GM12878 (cell line): ENCODE measurements at regions of chr2 and their contacts with region 1.

Region 1: DNA sequence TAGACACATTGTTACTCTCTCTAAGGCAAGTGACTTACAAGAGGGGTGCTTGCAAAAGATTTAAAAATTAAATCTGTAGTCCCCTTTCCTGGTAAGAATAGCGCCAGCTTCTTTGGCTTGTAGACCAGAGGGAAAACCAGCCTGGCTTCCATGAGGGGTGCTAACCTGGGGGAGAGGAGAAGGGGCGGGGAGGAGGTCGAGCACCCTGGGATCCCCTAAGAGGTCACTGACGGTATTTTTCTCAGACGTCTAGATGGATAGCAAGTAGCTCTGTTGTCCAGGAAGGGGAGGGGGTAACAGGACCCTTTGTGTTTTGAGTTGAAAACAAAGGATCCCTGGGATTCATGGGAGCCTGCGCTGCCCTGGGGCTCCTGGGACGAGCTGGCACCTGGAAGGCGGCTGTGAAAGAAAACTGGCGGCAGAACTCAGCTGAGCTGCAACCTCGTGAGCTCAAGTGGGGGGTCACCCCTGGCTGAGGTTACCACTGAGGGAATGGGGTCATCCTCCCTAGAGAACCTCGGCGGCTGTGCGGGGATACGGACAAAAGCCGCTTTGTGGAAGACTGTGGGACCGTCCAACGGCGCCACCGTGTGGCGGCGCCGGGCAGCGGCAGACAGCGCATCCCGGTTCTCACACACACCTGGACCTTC is 37.8 kb upstream of the MRPL19 start:
- DNase-seq: no peak
- ATAC-seq: peak; percentile 97
- H3K4me3 ChIP-seq: peak overlapping the region; percentile 49; the same call in 1 of the 2 replicates
- H3K27ac ChIP-seq: no peak overlapping the region
- H3K4me1 ChIP-seq: 0 out of 2 replicates have a peak, but pooled peaks cover 2% of the 10 kb centered on the region
- H3K27me3 ChIP-seq: no peaks in the 10 kb centered on the region
- CTCF ChIP-seq: peak; percentile 96 to 98 (median 98)
- EP300 ChIP-seq: no peak
- POLR2A ChIP-seq: no peak
- RAD21 ChIP-seq: peak; percentile 88

Region 2: GRCh38 chr2:74690571-74690970 is 918.2 kb before region 1 on chr2:
- CTCF ChIA-PET with region 1: interaction called, 4 read pairs
- POLR2A ChIA-PET with region 1: no interaction called
- RAD21 ChIA-PET with region 1: no interaction called
- SMC1A ChIA-PET with region 1: interaction called, 3 read pairs
- in situ Hi-C with region 1: loop called (anchors 10 kb)
- intact Hi-C with region 1: no loop called
- DNase-seq: peak; percentile 28
- ATAC-seq: peak; percentile 95
- H3K4me3 ChIP-seq: no peak overlapping the region
- H3K27ac ChIP-seq: no peak overlapping the region
- H3K4me1 ChIP-seq: no peaks in the 10 kb centered on the region
- H3K27me3 ChIP-seq: peaks cover 0 to 2% of the 10 kb centered on the region in 2 experiments; a peak in 1 of 4 replicates
- CTCF ChIP-seq: peak; percentile 71 to 92 (median 72)
- EP300 ChIP-seq: no peak
- POLR2A ChIP-seq: no peak
- RAD21 ChIP-seq: peak; percentile 94

Region 3: DNA sequence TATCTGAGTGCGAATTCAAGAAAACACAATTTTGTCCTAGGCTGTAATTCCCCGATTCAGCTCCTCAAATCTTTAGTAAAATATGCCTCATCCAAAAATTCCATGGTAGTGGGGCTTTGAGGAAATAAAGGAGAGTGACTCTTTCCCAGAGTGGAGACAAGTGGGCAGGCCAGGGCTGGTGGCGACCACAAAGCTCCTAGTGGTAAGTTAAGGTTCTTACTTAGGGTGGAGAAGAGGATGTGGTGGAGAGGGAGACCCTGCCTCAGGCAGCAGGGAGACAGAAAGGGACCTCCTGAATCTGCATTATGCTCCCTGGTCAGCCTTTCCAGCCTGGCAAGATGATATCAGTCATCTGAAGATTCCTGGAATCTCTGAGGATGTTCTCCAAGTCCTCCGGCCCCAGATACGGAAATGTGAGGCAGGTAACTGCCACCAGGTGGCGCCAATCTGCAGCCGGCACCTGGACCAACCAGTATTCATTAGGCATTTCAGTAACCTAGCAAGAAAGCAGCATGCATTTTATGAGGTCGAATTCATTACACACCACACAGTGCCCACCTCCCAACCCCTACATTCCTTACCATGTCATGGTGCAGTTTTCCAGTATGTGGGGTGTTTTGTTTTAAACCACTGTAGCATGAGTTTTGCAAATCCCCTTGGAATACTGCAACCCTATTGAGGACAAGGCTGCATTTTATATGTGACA is 544.0 kb before region 1 on chr2:
- CTCF ChIA-PET with region 1: interaction called, 10 read pairs
- POLR2A ChIA-PET with region 1: no interaction called
- RAD21 ChIA-PET with region 1: interaction called, 10 read pairs
- SMC1A ChIA-PET with region 1: interaction called, 19 read pairs
- in situ Hi-C with region 1: no loop called
- intact Hi-C with region 1: no loop called
- DNase-seq: no peak
- ATAC-seq: peak; percentile 91
- H3K4me3 ChIP-seq: no peak overlapping the region
- H3K27ac ChIP-seq: no peak overlapping the region
- H3K4me1 ChIP-seq: no peaks in the 10 kb centered on the region
- H3K27me3 ChIP-seq: no peaks in the 10 kb centered on the region
- CTCF ChIP-seq: peak; percentile 67 to 92 (median 89)
- EP300 ChIP-seq: no peak
- POLR2A ChIP-seq: no peak
- RAD21 ChIP-seq: peak; percentile 78

Region 4: DNA sequence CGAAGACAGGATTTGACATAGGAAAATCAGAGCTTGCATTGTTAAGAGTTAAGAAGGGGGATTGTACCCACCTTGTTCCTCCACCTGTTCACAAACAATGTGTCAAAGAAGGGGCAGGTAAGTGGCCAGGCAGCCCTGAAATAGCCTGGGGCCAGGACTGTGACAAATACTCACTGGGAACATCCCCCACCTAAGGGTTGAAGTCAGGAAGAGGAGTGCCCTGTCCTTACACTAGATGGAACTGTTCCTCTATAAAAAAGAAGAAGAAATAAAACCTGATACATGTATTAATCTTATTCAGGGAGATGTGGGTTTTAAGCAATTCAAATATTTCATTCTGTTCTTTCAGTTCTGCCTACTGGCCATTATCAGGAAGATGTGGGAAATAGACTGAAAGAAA is 451.4 kb before region 1 on chr2:
- CTCF ChIA-PET with region 1: interaction called, 16 read pairs
- POLR2A ChIA-PET with region 1: no interaction called
- RAD21 ChIA-PET with region 1: interaction called, 5 read pairs
- SMC1A ChIA-PET with region 1: interaction called, 11 read pairs
- in situ Hi-C with region 1: no loop called
- intact Hi-C with region 1: no loop called
- DNase-seq: no peak
- ATAC-seq: peak; percentile 45; the same call in 2 of the 3 replicates
- H3K4me3 ChIP-seq: no peak overlapping the region
- H3K27ac ChIP-seq: no peak overlapping the region
- H3K4me1 ChIP-seq: no peaks in the 10 kb centered on the region
- H3K27me3 ChIP-seq: no peaks in the 10 kb centered on the region
- CTCF ChIP-seq: peak in 2 of 3 experiments; percentile 15 to 25; a peak in 2 of 6 replicates
- EP300 ChIP-seq: no peak
- POLR2A ChIP-seq: no peak
- RAD21 ChIP-seq: peak; percentile 43; the same call in 1 of the 2 replicates

Region 5: DNA sequence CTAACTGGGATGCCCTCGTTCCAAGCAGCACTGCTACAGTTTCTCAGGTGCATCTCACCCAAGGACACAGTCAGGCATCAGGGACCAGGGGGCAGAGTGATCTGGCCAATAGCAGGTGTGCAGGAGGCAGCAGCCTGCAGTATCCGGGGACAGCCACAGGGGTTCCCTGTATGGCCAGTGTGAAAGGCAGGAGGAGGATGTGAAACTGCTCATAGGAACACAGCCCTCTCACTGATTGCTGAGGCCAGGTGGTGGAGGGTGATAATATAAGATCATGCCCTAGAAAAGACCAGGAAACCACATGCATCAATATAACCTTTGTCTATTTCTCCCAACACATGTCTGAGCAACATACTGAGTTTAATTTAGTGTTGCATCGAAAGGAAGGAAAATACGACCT is 296.8 kb before region 1 on chr2:
- CTCF ChIA-PET with region 1: interaction called, 3 read pairs
- POLR2A ChIA-PET with region 1: no interaction called
- RAD21 ChIA-PET with region 1: interaction called, 3 read pairs
- SMC1A ChIA-PET with region 1: interaction called, 3 read pairs
- in situ Hi-C with region 1: no loop called
- intact Hi-C with region 1: loop called (anchors 5 kb)
- DNase-seq: peak; percentile 89
- ATAC-seq: peak; percentile 100
- H3K4me3 ChIP-seq: no peak overlapping the region
- H3K27ac ChIP-seq: no peak overlapping the region
- H3K4me1 ChIP-seq: peaks cover 9% of the 10 kb centered on the region
- H3K27me3 ChIP-seq: no peaks in the 10 kb centered on the region
- CTCF ChIP-seq: peak; percentile 84 to 89 (median 85)
- EP300 ChIP-seq: peak; percentile 28 to 76; a peak in 3 of 4 replicates
- POLR2A ChIP-seq: no peak
- RAD21 ChIP-seq: peak; percentile 79

Region 6: DNA sequence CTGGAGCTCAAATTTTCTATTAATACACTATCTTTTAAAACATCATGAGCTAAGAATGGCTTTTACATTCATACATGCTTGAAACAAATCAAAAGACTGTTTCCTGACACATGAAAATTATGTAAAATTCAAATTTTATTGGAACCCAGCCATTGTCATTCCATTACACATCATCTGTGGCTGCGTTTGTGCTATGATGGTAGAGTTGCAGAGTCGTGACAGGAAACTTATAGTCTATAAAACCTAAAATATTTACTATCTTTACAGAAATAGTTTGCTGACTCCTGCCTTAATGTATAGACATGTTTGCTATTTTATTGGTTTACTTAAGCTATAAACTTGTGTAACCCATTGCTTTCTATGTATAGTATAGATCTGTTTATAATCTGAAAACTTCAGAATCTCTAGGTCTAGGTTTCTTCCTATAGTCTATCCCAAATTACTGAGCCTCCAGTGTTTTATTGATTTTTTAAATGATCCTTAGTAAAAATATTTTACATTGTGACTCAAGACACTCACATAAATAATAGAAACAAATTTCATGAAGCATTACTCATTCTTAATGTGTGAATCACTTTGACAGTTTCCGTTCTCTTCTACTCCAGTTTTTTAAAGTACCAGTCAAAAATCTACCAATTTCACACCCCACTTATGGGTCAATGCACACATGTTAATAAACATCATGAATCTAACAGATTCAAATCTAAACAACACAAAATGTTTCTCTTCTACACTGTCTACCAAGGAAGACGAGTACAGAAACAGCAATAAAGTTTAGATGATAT is 11.3 kb after region 1 on chr2:
- CTCF ChIA-PET with region 1: interaction called, 24 read pairs
- POLR2A ChIA-PET with region 1: no interaction called
- RAD21 ChIA-PET with region 1: interaction called, 6 read pairs
- SMC1A ChIA-PET with region 1: interaction called, 4 read pairs
- in situ Hi-C with region 1: no loop called
- intact Hi-C with region 1: no loop called
- DNase-seq: no peak
- ATAC-seq: no peak
- H3K4me3 ChIP-seq: no peak overlapping the region
- H3K27ac ChIP-seq: no peak overlapping the region
- H3K4me1 ChIP-seq: no peaks in the 10 kb centered on the region
- H3K27me3 ChIP-seq: peaks cover 0 to 2% of the 10 kb centered on the region in 2 experiments; a peak in 2 of 4 replicates
- CTCF ChIP-seq: no peak
- EP300 ChIP-seq: no peak
- POLR2A ChIP-seq: no peak
- RAD21 ChIP-seq: no peak